Breast epithelium (tissue), 4 donors: ENCODE measurements at regions of chr13 and their contacts with region 1.

Region 1: DNA sequence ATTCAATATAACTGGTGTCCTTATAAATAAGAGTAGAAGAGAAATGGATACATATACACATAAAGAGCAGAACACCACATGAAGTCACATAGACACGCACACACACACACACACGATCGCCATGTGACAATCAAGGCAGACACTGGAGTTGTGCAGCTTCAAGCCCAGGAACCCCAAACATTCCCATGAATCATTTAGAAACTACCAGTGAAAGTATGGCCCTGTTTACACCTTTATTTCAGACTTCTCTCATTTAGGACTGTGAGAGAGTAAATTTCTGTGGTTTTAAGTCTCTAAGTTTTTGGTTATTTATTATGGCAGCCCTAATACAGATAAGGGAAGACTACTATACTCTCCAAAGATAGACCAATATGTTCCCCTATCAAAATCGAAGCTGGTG is 20.4 kb upstream of the TNFSF13B start:
- DNase-seq: no peak
- H3K4me3 ChIP-seq: no peak overlapping the region
- H3K27ac ChIP-seq: no peak overlapping the region
- H3K4me1 ChIP-seq: no peaks in the 10 kb centered on the region
- H3K27me3 ChIP-seq: no peaks in the 10 kb centered on the region
- CTCF ChIP-seq: no peak
- POLR2A ChIP-seq: no peak

Region 2: DNA sequence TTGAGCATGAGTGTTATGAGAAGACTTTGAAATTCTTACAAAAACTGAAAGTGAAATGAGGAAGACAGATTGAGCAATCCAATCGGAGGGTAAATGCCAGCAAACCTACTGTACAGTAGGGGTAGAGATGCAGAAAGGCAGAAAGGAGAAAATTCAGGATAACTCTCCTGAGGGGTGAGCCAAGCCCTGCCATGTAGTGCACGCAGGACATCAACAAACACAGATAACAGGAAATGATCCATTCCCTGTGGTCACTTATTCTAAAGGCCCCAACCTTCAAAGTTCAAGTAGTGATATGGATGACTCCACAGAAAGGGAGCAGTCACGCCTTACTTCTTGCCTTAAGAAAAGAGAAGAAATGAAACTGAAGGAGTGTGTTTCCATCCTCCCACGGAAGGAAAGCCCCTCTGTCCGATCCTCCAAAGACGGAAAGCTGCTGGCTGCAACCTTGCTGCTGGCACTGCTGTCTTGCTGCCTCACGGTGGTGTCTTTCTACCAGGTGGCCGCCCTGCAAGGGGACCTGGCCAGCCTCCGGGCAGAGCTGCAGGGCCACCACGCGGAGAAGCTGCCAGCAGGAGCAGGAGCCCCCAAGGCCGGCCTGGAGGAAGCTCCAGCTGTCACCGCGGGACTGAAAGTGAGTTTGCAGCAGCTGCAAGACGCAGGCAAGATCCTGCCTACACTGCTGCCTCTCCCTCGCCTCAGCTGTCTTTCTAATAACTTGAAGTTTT is 20.6 kb after region 1 on chr13 and contains the start of gene TNFSF13B:
- intact Hi-C with region 1: no loop called
- DNase-seq: no peak
- H3K4me3 ChIP-seq: peak within 1 kb of the TSS; percentile 45 to 67 (median 53)
- H3K27ac ChIP-seq: peak within 1 kb of the TSS; percentile 14 to 54
- H3K4me1 ChIP-seq: no peaks in the 10 kb centered on the region
- H3K27me3 ChIP-seq: no peaks in the 10 kb centered on the region
- CTCF ChIP-seq: no peak
- POLR2A ChIP-seq: no peak
- total RNA-seq, gene TNFSF13B: 3.2 to 4.5 (median 3.9) TPM

Region 3: DNA sequence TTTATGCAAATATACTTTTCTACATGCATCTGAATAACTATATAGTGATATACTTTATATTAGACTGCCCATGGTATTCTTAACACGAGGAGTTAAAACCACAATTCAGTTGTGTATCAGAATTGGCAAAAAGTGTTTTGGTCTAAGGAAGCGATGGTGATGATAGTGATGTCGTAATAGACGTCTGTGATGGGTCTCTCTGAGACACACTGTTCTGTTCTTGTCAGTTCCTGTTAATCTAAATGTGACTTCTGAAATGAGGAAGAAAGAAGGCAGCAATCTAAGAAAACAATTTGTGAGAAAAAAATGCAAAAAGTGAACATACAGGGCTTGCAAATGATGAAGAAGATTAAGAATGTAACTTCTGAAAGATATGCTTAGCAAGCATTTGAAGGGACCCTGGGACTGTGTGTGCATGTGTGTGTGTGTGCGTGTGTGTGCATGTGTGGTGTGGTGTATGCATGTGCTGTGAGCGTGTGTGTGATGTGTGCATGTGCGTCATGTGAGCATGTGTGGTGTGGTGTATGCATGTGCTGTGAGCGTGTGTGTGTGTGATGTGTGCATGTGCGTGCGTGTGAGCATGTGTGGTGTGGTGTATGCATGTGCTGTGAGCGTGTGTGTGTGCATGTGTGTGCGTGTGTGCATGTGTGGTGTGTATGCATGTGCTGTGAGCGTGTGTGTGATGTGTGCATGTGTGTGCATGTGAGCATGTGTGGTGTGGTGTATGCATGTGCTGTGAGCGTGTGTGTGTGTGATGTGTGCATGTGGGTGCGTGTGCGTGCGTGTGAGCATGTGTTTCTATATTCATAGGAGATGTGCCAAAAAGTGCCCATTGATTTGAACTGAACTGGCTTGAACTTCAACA is 1405.4 kb after region 1 on chr13:
- intact Hi-C with region 1: loop called (anchors 5 kb)
- DNase-seq: no peak
- H3K4me3 ChIP-seq: peak overlapping the region in 1 of 3 donors; percentile 24
- H3K27ac ChIP-seq: peak overlapping the region in 1 of 2 donors; percentile 73
- H3K4me1 ChIP-seq: no peaks in the 10 kb centered on the region
- H3K27me3 ChIP-seq: no peaks in the 10 kb centered on the region
- CTCF ChIP-seq: no peak
- POLR2A ChIP-seq: no peak